Activated B cell treated with CpG ODN at 0.5 μM for 24 hours (primary cell): ENCODE measurements at regions of chr15 and their contacts with region 1.

Region 1: DNA sequence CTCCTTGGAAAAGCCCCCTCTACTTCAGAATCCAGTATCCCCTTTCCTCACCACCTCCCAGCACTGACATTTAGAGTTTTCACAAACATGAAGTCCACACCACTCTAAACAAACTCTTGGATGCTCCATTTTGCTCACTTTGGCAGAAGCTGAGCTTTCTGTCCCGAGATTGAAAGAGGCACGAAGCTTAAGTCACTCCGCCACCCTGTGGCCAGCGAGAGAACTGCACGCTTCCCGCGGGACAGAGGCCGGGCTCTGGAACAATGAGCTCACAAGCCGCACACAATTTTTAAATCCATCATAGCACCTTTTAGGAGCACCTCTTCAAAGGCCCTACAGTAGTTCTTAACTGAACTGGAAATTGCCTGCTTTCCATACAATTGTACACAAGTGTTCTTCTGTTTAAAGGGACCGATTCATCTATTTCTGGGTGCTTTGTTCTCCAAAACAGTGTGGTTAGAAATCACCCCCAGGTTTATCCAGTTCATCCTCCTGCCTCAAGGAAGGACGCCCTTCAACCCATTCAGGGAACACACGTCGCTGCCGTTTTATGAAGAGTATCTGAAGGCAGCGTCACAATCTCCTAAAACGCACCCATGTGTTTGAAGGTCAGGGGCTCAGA is 226.1 kb downstream of the VPS13C start:
- DNase-seq: peak; percentile 66
- ATAC-seq: peak; percentile 77
- H3K4me3 Mint-ChIP-seq: no peak overlapping the region
- H3K27ac Mint-ChIP-seq: no peak overlapping the region
- H3K4me1 Mint-ChIP-seq: peaks cover 3% of the 10 kb centered on the region
- H3K27me3 Mint-ChIP-seq: peaks cover 24% of the 10 kb centered on the region
- CTCF ChIP-seq: no peak

Region 2: GRCh38 chr15:60362321-60363086 is 1471.7 kb before region 1 on chr15:
- CTCF ChIA-PET with region 1: no interaction called
- POLR2A ChIA-PET with region 1: no interaction called
- intact Hi-C with region 1: loop called (anchors 10 kb)
- DNase-seq: no peak
- ATAC-seq: no peak
- H3K4me3 Mint-ChIP-seq: no peak overlapping the region
- H3K27ac Mint-ChIP-seq: no peak overlapping the region
- H3K4me1 Mint-ChIP-seq: peaks cover 3% of the 10 kb centered on the region
- H3K27me3 Mint-ChIP-seq: no peaks in the 10 kb centered on the region
- CTCF ChIP-seq: no peak

Region 3: GRCh38 chr15:61169904-61170695 is 664.1 kb before region 1 on chr15:
- CTCF ChIA-PET with region 1: interaction called, 3 read pairs
- POLR2A ChIA-PET with region 1: no interaction called
- intact Hi-C with region 1: loop called (anchors 10 kb)
- DNase-seq: no peak
- ATAC-seq: peak; percentile 28
- H3K4me3 Mint-ChIP-seq: peak overlapping the region; percentile 25
- H3K27ac Mint-ChIP-seq: no peak overlapping the region
- H3K4me1 Mint-ChIP-seq: peaks cover 19% of the 10 kb centered on the region
- H3K27me3 Mint-ChIP-seq: peaks cover 10% of the 10 kb centered on the region
- CTCF ChIP-seq: no peak

Region 4: GRCh38 chr15:61195116-61196002 is 638.8 kb before region 1 on chr15:
- CTCF ChIA-PET with region 1: interaction called, 4 read pairs
- POLR2A ChIA-PET with region 1: no interaction called
- intact Hi-C with region 1: loop called (anchors 10 kb)
- DNase-seq: no peak
- ATAC-seq: no peak
- H3K4me3 Mint-ChIP-seq: no peak overlapping the region
- H3K27ac Mint-ChIP-seq: no peak overlapping the region
- H3K4me1 Mint-ChIP-seq: no peaks in the 10 kb centered on the region
- H3K27me3 Mint-ChIP-seq: peaks cover 2% of the 10 kb centered on the region
- CTCF ChIP-seq: peak; percentile 29

Region 5: DNA sequence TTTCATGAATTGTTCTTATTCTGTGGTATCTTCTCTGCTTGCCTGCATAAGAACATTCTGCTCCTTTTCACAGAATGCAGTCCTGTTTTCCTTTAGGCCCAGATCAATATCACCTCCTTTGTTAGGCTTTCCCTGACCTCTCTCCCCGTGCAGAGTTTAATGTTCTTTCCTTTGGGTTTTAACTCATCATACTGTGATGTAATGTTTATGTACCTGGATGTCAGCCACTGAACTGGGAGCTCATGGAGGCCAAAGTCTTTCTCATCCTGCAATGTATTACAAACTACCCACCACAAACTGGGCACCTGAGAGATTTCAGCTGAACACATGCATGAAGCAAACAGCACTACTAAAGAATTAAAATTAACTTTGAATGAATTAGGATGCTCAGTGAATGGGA is 412.2 kb before region 1 on chr15:
- CTCF ChIA-PET with region 1: no interaction called
- POLR2A ChIA-PET with region 1: no interaction called
- intact Hi-C with region 1: no loop called
- DNase-seq: no peak
- ATAC-seq: no peak
- H3K4me3 Mint-ChIP-seq: no peak overlapping the region
- H3K27ac Mint-ChIP-seq: no peak overlapping the region
- H3K4me1 Mint-ChIP-seq: no peaks in the 10 kb centered on the region
- H3K27me3 Mint-ChIP-seq: no peaks in the 10 kb centered on the region
- CTCF ChIP-seq: no peak

Region 6: DNA sequence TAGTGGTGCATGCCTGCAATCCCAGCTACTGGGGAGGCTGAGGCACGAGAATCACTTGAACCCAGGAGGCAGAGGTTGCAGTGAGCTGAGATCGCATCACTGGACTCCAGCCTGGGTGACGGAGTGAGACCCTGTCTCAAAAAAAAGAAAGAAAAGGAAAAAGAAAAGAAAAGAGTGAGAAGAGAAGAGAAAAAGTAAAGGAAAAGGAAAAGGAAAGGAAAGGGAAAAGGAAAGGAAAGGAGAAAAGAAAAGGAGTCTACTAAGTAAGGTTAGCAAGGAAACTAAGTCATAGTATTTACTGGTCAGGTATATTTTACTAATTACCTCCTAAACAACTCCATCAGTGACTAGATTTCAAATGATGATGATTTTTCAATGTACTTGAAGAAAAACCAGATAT is 27.8 kb after region 1 on chr15:
- CTCF ChIA-PET with region 1: no interaction called
- POLR2A ChIA-PET with region 1: no interaction called
- intact Hi-C with region 1: no loop called
- DNase-seq: no peak
- ATAC-seq: no peak
- H3K4me3 Mint-ChIP-seq: no peak overlapping the region
- H3K27ac Mint-ChIP-seq: no peak overlapping the region
- H3K4me1 Mint-ChIP-seq: peaks cover 1% of the 10 kb centered on the region
- H3K27me3 Mint-ChIP-seq: no peaks in the 10 kb centered on the region
- CTCF ChIP-seq: no peak

Region 7: DNA sequence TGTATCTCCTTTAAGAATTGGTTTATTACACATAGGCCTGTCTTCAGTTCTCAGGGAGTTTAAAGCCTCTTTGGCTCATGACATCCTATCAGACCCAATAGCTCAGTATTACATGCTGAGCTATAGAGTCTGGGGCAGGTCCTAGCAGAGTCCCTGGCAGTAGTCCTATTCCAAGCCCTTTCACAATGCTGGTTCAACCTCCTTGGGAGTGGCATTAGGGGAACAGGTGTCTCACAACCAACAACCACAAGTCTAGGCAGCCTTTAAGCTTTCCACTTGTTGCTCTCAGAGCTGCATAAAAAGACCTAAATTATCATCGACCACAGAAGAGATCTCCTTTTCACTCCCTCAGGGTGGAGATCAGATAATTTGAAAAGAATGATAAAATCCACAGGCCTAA is 353.7 kb after region 1 on chr15:
- CTCF ChIA-PET with region 1: no interaction called
- POLR2A ChIA-PET with region 1: no interaction called
- intact Hi-C with region 1: no loop called
- DNase-seq: no peak
- ATAC-seq: no peak
- H3K4me3 Mint-ChIP-seq: no peak overlapping the region
- H3K27ac Mint-ChIP-seq: no peak overlapping the region
- H3K4me1 Mint-ChIP-seq: peaks cover 2% of the 10 kb centered on the region
- H3K27me3 Mint-ChIP-seq: peaks cover 9% of the 10 kb centered on the region
- CTCF ChIP-seq: no peak